Naive thymus-derived CD4-positive, alpha-beta T cell (primary cell): ENCODE measurements at regions of chr4 and their contacts with region 1.

Region 1: DNA sequence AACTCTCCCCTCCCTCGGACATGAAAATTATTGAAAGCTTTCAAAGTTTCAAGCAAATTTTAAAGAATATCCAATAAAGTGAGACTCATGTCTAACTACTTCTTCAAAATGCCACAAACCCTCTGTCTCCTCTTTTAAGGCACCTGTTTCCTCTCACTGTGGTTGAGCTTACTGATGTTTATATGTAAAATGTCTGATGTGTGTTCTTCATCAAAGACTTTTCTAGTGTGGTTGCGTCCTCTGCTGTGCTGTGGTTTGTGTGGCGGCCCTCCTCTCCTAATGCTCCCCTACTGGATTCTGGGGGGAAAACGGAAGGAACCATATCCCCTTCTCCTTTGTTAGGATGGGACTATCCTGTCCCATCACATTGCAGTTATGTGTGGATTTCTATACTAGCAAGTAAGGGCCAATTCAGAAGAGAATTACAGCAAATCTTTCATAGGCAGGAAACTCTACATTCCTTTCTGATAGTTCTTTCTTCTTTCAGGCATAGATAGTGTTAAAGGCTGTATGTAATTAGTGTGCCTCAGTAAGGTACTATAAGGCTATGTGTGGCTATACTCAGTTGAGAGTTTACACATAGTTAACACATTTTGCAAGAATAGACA is 221.0 kb upstream of the GPRIN3 start:
- DNase-seq: peak in 7 of 9 donors; percentile 15 to 65 (median 61)
- ATAC-seq: peak; percentile 67
- H3K4me3 ChIP-seq: no peak overlapping the region
- H3K4me3 Mint-ChIP-seq: peak overlapping the region; percentile 1 to 74 (median 42)
- H3K27ac ChIP-seq: no peak overlapping the region
- H3K27ac Mint-ChIP-seq: peak overlapping the region in 1 of 9 donors; percentile 1
- H3K4me1 ChIP-seq: peaks cover 4 to 9% of the 10 kb centered on the region in 2 donors
- H3K4me1 Mint-ChIP-seq: peaks cover 9 to 22% (median 13%) of the 10 kb centered on the region in 7 donors
- H3K27me3 ChIP-seq: no peaks in the 10 kb centered on the region
- H3K27me3 Mint-ChIP-seq: peaks cover 31 to 57% (median 39%) of the 10 kb centered on the region in 5 donors

Region 2: DNA sequence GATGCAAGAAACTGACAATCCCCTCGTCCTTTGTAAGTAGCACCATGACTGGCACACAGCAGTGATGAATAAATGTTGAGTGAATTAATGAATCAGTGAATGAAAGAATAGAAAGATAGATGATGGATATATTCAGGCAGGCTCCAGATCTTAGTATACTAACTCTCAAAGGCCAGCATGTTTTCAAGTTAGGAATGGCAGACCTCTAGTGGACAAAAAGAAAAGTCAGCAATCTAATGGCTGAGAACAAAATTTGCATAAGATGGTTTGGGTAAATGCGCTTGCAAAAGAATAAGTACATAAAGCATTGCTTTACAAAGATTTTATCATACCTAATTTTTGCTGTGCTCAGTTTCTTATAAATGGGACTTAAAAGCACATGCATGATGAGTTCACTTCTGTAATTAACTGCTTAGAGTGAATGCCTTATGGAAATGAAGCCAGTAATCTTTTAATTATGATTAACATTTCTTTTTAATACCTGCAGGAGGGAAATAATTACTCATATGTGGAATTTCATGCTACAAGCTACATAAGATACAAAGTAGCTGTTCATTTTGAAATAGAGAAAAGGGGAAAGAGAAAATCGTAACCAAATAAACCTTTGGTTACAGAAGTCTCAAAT is 94.2 kb before region 1 on chr4:
- CTCF ChIA-PET with region 1: no interaction called
- POLR2A ChIA-PET with region 1: no interaction called
- intact Hi-C with region 1: loop called in 1 of 2 experiments (anchors 5 kb)
- DNase-seq: peak in 6 of 9 donors; percentile 28 to 61 (median 45)
- ATAC-seq: peak; percentile 72
- H3K4me3 ChIP-seq: no peak overlapping the region
- H3K4me3 Mint-ChIP-seq: no peak overlapping the region
- H3K27ac ChIP-seq: no peak overlapping the region
- H3K27ac Mint-ChIP-seq: peak overlapping the region in 1 of 9 donors; percentile 14
- H3K4me1 ChIP-seq: no peaks in the 10 kb centered on the region
- H3K4me1 Mint-ChIP-seq: peaks cover 8 to 23% (median 13%) of the 10 kb centered on the region in 7 donors
- H3K27me3 ChIP-seq: no peaks in the 10 kb centered on the region
- H3K27me3 Mint-ChIP-seq: no peaks in the 10 kb centered on the region